Activated naive CD8-positive, alpha-beta T cell treated with anti-CD3 and anti-CD28 coated beads, Interleukin-2, amount 10 ng/mL, durations not matched to agents 7 days and 5 days (primary cell): ENCODE measurements at regions of chr3 and their contacts with region 1.

Region 1: GRCh38 chr3:187738331-187739093 is 6.8 kb downstream of the BCL6 start:
- DNase-seq: peak; percentile 68
- ATAC-seq: peak; percentile 16
- H3K4me3 Mint-ChIP-seq: peak overlapping the region; percentile 99
- H3K27ac Mint-ChIP-seq: peak overlapping the region; percentile 99
- H3K4me1 Mint-ChIP-seq: peaks cover 30% of the 10 kb centered on the region
- H3K27me3 Mint-ChIP-seq: no peaks in the 10 kb centered on the region

Region 2: DNA sequence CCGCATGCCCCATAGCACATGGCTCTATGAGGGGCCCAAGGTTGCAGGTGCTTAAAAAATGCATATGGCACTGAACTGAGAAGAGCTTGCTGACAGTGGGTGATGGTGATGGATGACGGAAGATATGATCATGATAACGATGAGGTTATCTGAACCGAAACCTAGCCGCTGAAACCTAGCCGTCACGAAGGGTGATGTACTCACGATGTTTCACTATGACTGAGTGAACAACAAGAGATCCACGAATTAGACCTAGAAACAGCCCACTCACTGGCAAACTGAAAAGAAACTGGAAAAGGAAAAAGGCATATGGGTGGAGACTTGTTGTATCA is 64.4 kb after region 1 on chr3:
- POLR2A ChIA-PET with region 1: interaction called, 271 read pairs
- DNase-seq: no peak
- ATAC-seq: peak; percentile 50
- H3K4me3 Mint-ChIP-seq: peak overlapping the region; percentile 73
- H3K27ac Mint-ChIP-seq: peak overlapping the region; percentile 95
- H3K4me1 Mint-ChIP-seq: peaks cover 75% of the 10 kb centered on the region
- H3K27me3 Mint-ChIP-seq: no peaks in the 10 kb centered on the region

Region 3: GRCh38 chr3:187974871-187975271 is 236.4 kb after region 1 on chr3:
- POLR2A ChIA-PET with region 1: interaction called, 71 read pairs
- DNase-seq: no peak
- ATAC-seq: peak; percentile 65
- H3K4me3 Mint-ChIP-seq: peak overlapping the region; percentile 76
- H3K27ac Mint-ChIP-seq: peak overlapping the region; percentile 94
- H3K4me1 Mint-ChIP-seq: peaks cover 62% of the 10 kb centered on the region
- H3K27me3 Mint-ChIP-seq: no peaks in the 10 kb centered on the region

Region 4: DNA sequence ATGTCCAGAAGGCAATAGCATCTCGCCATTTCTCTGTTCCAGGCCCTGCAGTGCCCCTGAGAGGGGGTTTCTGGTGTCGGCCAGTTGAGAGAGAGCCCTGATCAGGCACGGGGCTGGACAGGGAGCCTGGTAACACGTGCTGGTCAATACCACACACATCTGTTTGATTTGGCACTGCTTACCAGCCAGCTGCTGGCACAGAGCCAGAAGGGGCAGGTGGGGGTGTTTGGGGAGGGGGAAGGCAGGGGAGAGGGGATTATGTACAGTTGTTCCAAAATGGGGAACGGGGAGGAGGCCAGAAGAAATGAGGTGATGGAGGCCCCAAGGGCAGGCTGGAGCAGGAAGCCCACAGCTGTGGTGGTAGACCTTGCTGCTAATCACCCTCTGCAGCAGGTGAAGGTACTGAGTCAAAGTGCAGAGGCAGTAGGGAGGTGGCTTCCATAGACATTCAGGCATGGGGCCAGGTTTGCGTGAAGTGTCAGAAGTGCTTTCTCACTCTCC is 261.9 kb after region 1 on chr3:
- POLR2A ChIA-PET with region 1: interaction called, 57 read pairs
- DNase-seq: peak; percentile 59
- ATAC-seq: peak; percentile 53
- H3K4me3 Mint-ChIP-seq: peak overlapping the region; percentile 77
- H3K27ac Mint-ChIP-seq: peak overlapping the region; percentile 94
- H3K4me1 Mint-ChIP-seq: peaks cover 64% of the 10 kb centered on the region
- H3K27me3 Mint-ChIP-seq: no peaks in the 10 kb centered on the region

Region 5: DNA sequence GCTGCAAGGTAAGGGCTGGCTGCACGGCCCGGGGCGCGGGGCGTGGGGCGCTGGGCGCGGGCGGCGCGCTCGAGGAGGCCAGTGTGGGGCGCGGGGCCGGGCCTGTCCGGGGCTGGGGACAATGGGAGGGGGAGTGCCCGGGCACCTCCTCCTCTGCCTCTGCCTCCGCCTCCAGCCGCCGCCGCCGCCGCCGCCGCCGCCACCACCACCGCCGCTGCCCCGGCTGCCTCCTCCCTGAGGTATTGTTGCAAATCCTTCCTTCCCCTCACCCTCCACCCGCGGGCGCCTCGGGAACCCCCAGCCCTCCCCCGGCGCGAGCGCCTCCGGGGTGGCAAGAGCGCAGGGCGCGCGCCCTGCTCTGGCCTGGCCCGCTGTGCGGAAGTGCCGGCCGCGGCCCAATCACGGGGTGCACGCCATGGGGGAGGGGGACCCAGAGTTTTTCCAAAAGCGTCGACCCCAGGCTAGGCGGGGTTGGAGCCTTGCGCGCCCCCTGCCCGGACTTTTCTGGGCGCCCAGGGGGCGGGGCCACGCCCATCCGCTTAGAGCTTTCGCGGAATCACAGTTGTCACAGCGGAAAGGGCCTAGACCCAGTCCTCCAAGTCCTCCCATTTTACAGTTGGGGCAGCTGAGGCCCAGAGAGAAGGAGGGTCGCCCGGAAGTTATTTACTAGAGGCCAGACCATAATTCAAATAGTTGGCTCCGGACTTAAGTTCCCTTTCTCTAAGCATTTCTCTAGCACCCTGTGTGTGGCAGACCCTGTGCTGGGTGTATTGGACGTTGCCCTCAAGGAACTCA is 415.7 kb after region 1 on chr3 and contains the start of gene LPP:
- POLR2A ChIA-PET with region 1: interaction called, 134 read pairs
- DNase-seq: peak; percentile 91
- ATAC-seq: peak; percentile 84
- H3K4me3 Mint-ChIP-seq: peak within 1 kb of the TSS; percentile 92
- H3K27ac Mint-ChIP-seq: peak within 1 kb of the TSS; percentile 94
- H3K4me1 Mint-ChIP-seq: peaks cover 54% of the 10 kb centered on the region
- H3K27me3 Mint-ChIP-seq: no peaks in the 10 kb centered on the region
- total RNA-seq, gene LPP: 49.6 to 54.3 TPM

Region 6: GRCh38 chr3:188954590-188955208 is 1216.2 kb after region 1 on chr3:
- POLR2A ChIA-PET with region 1: interaction called, 46 read pairs
- DNase-seq: peak; percentile 75
- ATAC-seq: peak; percentile 82
- H3K4me3 Mint-ChIP-seq: no peak overlapping the region
- H3K27ac Mint-ChIP-seq: no peak overlapping the region
- H3K4me1 Mint-ChIP-seq: peaks cover 13% of the 10 kb centered on the region
- H3K27me3 Mint-ChIP-seq: no peaks in the 10 kb centered on the region